Caco-2 (cell line): ENCODE measurements at regions of chr7 and their contacts with region 1.

Region 1: DNA sequence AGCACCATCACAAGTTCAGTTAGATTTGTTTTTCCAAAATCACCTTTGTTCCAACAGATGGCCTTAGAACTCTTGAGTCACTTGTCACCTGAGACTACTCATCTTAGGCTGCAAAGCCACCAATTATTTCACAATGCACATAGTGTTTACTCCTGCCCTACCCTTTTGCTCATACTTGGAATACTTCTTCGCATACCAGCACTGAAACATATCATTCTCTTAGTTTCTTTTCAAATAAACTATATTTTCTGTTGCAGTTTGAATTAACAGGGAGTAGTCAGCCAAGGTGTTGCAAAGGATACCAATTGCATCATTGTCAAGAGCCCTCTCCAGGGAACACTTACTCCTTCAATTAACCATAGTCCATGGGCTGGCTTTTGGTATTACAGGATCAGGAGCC is 71.0 kb downstream of the CASD1 start:
- DNase-seq: peak; percentile 70 to 79
- H3K4me3 ChIP-seq: no peak overlapping the region
- H3K4me3 Mint-ChIP-seq: peak overlapping the region; percentile 40
- H3K27ac Mint-ChIP-seq: peak overlapping the region; percentile 88
- H3K4me1 ChIP-seq: peaks cover 47% of the 10 kb centered on the region
- H3K4me1 Mint-ChIP-seq: peaks cover 49% of the 10 kb centered on the region
- H3K27me3 ChIP-seq: no peaks in the 10 kb centered on the region
- H3K27me3 Mint-ChIP-seq: no peaks in the 10 kb centered on the region
- CTCF ChIP-seq: no peak

Region 2: DNA sequence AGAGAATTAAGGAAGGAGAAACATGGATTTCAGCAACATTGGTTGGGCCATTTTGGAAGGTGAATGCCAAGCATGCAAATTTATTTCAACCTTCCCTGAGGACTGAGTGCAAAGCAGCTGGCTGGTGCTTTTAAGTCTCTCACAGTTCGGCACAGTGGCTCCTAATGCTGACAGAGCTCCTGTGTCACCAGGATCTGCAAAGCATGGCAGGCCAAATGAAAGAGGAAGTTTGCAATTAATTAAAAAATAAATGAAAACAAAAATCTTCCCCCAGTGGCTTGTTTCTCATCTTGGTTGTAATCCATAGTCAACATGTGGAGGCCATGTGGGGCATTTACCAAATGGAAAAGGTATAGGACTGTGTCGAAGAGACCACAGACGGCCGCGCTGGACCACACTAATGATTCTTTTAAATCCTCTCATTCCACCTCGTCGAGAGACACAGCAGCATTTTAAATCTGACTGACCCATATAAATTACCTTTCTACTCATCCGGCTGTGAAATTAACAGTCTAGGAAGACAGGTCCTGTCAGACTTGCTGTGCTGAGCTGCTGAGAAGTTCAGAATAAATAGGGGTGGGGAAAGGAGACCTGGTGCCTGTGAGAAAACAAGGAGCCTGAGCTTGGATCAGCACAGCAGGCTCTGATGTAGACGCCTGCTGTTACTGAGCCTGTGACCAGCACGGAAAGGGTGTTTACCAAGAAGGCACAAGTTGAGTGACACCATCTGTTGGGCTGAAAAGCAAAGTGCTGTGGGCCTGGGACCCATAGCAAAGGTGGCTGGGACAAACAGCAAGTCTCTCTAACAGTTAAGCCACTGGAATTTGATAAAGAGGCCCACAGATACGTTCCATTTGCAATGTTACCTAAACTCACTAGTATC is 321.9 kb before region 1 on chr7:
- CTCF ChIA-PET with region 1: no interaction called
- POLR2A ChIA-PET with region 1: no interaction called
- intact Hi-C with region 1: no loop called
- DNase-seq: no peak
- H3K4me3 ChIP-seq: no peak overlapping the region
- H3K4me3 Mint-ChIP-seq: no peak overlapping the region
- H3K27ac Mint-ChIP-seq: no peak overlapping the region
- H3K4me1 ChIP-seq: no peaks in the 10 kb centered on the region
- H3K4me1 Mint-ChIP-seq: peaks cover 5% of the 10 kb centered on the region
- H3K27me3 ChIP-seq: no peaks in the 10 kb centered on the region
- H3K27me3 Mint-ChIP-seq: peaks cover 17% of the 10 kb centered on the region
- CTCF ChIP-seq: no peak

Region 3: DNA sequence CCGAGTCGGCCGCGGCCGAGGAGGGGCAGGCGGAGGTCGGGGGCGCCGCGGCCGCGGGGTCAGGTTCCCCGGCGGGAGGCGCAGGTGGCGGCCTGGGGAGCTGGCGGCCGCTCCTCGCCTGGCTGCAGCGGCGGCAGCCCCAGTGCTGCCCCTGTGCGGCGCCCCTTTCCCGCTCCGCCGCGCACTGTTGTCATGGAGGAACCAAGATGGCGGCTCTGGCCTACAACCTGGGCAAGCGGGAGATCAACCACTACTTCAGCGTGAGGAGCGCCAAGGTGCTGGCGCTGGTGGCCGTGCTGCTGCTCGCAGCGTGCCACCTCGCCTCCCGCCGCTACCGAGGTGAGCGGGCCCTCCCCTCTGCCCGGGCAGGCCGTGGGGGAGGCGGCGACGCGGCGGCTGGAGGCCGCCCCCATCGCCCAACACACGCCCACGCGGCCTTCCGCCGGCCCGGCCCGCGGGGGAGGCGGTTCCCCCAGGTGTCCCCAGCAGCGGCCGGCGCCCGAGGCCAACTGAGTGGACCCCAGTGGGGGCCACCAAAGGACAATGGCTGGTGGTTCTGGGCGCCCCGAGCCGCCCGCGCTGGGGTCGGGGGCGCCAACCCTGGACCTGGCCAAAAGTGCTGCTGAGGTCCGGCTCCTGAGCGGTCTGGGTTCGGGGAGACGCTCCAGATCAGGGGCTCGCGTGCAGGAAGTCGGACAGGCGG is 70.6 kb before region 1 on chr7:
- CTCF ChIA-PET with region 1: no interaction called
- POLR2A ChIA-PET with region 1: interaction called, 4 read pairs
- intact Hi-C with region 1: loop called (anchors 1 kb)
- DNase-seq: peak; percentile 74 to 84
- H3K4me3 ChIP-seq: peak overlapping the region; percentile 72
- H3K4me3 Mint-ChIP-seq: peak overlapping the region; percentile 79
- H3K27ac Mint-ChIP-seq: peak overlapping the region; percentile 65
- H3K4me1 ChIP-seq: peaks cover 23% of the 10 kb centered on the region
- H3K4me1 Mint-ChIP-seq: peaks cover 7% of the 10 kb centered on the region
- H3K27me3 ChIP-seq: no peaks in the 10 kb centered on the region
- H3K27me3 Mint-ChIP-seq: no peaks in the 10 kb centered on the region
- CTCF ChIP-seq: peak in 1 of 2 experiments; percentile 30

Region 4: DNA sequence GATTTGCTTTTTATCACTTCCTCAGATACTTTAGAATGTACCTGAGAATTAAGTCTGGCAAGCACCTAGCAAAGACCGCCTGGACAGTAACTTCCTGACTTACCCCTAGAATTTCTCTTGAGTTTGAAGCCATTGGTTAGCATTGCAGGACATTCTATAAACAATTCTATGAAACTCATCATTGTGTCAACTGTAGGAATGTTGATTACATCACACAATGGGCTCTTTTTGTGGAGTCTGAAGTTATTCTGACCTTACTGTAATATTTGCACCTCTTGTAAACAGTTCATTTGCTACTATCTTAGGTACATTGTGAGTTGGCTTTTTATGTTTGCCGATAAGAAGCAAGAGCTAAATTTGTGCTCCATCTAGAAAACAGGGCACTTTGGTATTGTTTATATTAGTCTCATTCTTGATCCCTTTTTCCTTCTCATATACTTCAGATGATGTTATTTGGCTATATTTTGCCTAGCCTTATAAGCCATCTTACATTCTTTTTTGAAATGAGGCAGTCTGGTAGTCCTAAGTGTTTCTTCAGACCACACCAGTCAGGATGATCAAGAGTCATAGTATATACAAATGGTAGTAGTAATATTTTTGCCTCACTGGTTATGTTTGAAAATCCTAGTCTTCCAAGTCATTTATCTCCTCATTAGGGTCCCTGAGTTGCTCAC is 18.6 kb before region 1 on chr7:
- CTCF ChIA-PET with region 1: no interaction called
- POLR2A ChIA-PET with region 1: no interaction called
- intact Hi-C with region 1: loop called (anchors 1 kb)
- DNase-seq: no peak
- H3K4me3 ChIP-seq: no peak overlapping the region
- H3K4me3 Mint-ChIP-seq: no peak overlapping the region
- H3K27ac Mint-ChIP-seq: no peak overlapping the region
- H3K4me1 ChIP-seq: peaks cover 32% of the 10 kb centered on the region
- H3K4me1 Mint-ChIP-seq: peaks cover 10% of the 10 kb centered on the region
- H3K27me3 ChIP-seq: no peaks in the 10 kb centered on the region
- H3K27me3 Mint-ChIP-seq: no peaks in the 10 kb centered on the region
- CTCF ChIP-seq: no peak

Region 5: DNA sequence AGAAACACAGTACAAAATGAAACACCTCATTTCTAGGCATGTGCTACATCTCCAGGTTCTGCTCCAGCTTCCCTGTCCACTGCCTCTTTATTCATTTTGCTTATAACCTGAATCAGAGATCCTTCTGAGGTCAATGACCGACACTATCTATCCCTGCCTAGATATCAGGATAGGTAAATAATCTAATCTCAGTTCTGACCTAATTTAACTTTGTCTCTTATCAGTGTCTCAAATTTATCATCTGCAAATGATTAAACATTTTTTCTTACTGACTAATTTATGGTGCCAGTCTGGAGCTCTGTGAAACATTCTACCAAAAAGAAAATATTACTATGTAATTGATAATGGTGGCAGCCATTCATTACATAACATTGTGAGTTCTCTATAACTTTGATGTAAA is 14.3 kb after region 1 on chr7:
- CTCF ChIA-PET with region 1: no interaction called
- POLR2A ChIA-PET with region 1: no interaction called
- intact Hi-C with region 1: loop called (anchors 1 kb)
- DNase-seq: peak in 1 of 2 experiments; percentile 42
- H3K4me3 ChIP-seq: no peak overlapping the region
- H3K4me3 Mint-ChIP-seq: no peak overlapping the region
- H3K27ac Mint-ChIP-seq: no peak overlapping the region
- H3K4me1 ChIP-seq: peaks cover 22% of the 10 kb centered on the region
- H3K4me1 Mint-ChIP-seq: peaks cover 8% of the 10 kb centered on the region
- H3K27me3 ChIP-seq: no peaks in the 10 kb centered on the region
- H3K27me3 Mint-ChIP-seq: no peaks in the 10 kb centered on the region
- CTCF ChIP-seq: no peak

Region 6: DNA sequence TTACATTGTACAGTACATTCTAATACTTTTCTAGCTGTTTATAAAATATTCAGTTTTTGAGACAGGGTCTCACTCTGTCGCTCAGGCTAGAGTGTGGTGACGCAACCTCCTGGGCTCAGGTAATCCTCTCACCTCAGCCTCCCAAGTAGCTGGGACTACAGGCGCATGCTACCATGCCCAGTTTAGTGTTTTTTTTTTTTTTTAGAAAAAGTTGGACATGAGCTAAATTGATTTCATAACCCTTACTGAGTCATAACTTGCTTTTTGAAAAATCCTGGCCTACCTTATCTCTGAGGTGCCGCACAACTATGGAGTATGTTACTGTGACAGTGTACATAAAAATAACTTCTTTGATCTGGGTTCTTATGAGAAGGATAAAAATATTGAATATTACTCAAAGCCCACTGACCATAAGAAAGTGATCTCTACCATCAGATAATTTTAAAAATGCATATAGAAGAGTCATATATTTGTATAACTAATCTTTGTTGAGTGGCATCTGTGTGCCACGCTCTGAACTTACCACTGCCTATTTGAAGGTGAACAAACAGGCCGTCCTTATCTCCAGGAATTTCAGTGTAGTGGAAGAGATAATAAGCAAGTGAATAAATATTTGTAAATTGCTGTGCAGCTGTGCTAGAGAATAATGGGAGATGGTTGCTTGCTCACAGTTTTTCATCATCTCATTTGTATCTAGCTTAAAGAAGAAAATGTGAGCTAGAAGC is 400.0 kb after region 1 on chr7:
- CTCF ChIA-PET with region 1: no interaction called
- POLR2A ChIA-PET with region 1: no interaction called
- intact Hi-C with region 1: loop called (anchors 2 kb)
- DNase-seq: peak; percentile 72 to 80
- H3K4me3 ChIP-seq: no peak overlapping the region
- H3K4me3 Mint-ChIP-seq: peak overlapping the region; percentile 36
- H3K27ac Mint-ChIP-seq: peak overlapping the region; percentile 78
- H3K4me1 ChIP-seq: peaks cover 17% of the 10 kb centered on the region
- H3K4me1 Mint-ChIP-seq: no peaks in the 10 kb centered on the region
- H3K27me3 ChIP-seq: no peaks in the 10 kb centered on the region
- H3K27me3 Mint-ChIP-seq: no peaks in the 10 kb centered on the region
- CTCF ChIP-seq: no peak